Endothelial cell of umbilical vein (primary cell): ENCODE measurements at regions of chr9 and their contacts with region 1.

Region 1: DNA sequence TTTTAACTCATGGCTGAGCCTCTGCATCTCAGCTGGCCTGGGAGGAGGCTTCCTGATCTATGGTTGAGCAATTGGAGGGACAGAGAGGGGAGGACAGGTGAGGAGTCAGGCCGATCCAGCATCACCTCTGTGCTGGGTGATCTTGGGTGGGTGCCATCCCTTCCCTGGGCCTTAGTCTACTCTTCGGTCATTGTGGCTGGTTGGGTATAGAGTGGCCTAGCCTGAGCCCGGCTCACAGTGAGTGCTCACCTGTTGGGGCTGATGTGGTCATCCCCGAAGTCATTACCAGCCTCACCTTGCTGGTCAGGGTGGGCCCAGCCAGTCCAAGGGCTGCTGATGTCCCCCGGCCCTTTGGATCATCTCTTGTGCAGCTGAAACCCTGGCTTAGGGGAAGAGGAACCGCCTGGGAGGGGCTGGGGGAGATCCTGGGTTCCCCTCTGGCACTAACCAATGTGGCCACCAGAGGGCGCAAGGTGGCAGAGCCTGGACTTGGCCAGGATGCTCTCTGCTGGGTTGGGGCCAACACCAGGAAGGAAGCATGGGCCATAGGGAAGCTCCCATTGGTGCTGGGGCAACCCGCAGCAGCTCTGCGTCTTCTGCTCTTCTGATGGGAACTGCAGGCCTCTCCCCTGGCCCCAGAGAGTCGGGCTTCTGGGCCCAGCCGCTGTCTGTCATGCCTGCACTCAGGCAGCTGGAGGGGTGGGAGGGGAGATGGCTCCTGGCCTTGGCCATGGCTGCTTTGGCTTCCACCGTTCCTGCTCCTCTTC is 17.3 kb upstream of the ODF2 start:
- DNase-seq: peak; percentile 78
- H3K4me3 ChIP-seq: no peak overlapping the region
- H3K27ac ChIP-seq: no peak overlapping the region
- H3K4me1 ChIP-seq: peaks cover 2% of the 10 kb centered on the region
- H3K27me3 ChIP-seq: no peaks in the 10 kb centered on the region
- CTCF ChIP-seq: peak; percentile 92 to 98
- POLR2A ChIP-seq: peak; percentile 63

Region 2: GRCh38 chr9:128094166-128094967 is 344.2 kb before region 1 on chr9:
- CTCF ChIA-PET with region 1: no interaction called
- POLR2A ChIA-PET with region 1: no interaction called
- dilution Hi-C with region 1: no loop called
- intact Hi-C with region 1: no loop called
- DNase-seq: peak; percentile 98
- H3K4me3 ChIP-seq: peak overlapping the region in 2 of 3 experiments; percentile 22 to 54
- H3K27ac ChIP-seq: peak overlapping the region; percentile 93
- H3K4me1 ChIP-seq: peaks cover 33% of the 10 kb centered on the region
- H3K27me3 ChIP-seq: no peaks in the 10 kb centered on the region
- CTCF ChIP-seq: no peak
- POLR2A ChIP-seq: peak; percentile 67

Region 3: DNA sequence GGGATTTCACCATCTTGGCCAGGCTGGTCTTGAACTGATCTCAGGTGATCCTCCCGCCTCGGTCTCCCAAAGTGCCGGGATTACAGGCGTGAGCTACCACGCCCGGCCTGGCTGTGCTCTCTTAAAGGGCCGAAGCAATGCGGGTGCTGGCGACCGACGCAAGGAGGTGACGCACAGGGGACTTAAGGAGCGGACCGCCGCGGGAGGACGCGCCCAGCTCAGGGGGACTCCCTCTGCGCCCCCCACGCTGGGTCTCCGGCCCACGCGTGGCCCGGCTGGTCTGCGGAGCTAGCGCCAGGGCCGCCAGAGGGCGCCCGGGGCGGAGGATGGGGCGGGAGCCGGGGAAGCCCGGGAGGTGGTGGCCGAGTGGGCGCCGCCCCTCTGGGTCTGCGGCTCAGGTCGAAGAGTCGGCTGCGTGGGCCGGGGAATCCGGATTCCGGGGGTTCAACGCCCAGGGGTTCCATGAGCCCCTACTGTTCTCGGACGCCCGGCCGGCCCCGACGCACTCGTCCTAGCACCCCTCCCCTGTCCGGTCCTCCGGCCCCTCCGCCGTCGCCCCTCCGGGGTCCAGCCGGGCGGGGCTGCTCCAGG is 18.4 kb before region 1 on chr9:
- CTCF ChIA-PET with region 1: interaction called, 45 read pairs
- POLR2A ChIA-PET with region 1: interaction called, 3 read pairs
- dilution Hi-C with region 1: no loop called
- intact Hi-C with region 1: no loop called
- DNase-seq: peak; percentile 63
- H3K4me3 ChIP-seq: peak overlapping the region; percentile 53 to 65 (median 59)
- H3K27ac ChIP-seq: no peak overlapping the region
- H3K4me1 ChIP-seq: peaks cover 13% of the 10 kb centered on the region
- H3K27me3 ChIP-seq: peaks cover 6 to 9% of the 10 kb centered on the region in 2 experiments
- CTCF ChIP-seq: peak; percentile 85 to 89
- POLR2A ChIP-seq: peak; percentile 28

Region 4: GRCh38 chr9:128455849-128456612 is 17.5 kb after region 1 on chr9 and contains the start of gene ODF2:
- CTCF ChIA-PET with region 1: interaction called, 57 read pairs
- POLR2A ChIA-PET with region 1: no interaction called
- dilution Hi-C with region 1: no loop called
- intact Hi-C with region 1: loop called (anchors 1 kb)
- DNase-seq: peak; percentile 95
- H3K4me3 ChIP-seq: peak within 1 kb of the TSS; percentile 50 to 66 (median 55)
- H3K27ac ChIP-seq: peak within 1 kb of the TSS; percentile 64
- H3K4me1 ChIP-seq: peaks cover 7% of the 10 kb centered on the region
- H3K27me3 ChIP-seq: no peaks in the 10 kb centered on the region
- CTCF ChIP-seq: no peak
- POLR2A ChIP-seq: peak; percentile 86
- total RNA-seq, gene ODF2: 49.5 and 50.5 TPM in 2 replicates

Region 5: DNA sequence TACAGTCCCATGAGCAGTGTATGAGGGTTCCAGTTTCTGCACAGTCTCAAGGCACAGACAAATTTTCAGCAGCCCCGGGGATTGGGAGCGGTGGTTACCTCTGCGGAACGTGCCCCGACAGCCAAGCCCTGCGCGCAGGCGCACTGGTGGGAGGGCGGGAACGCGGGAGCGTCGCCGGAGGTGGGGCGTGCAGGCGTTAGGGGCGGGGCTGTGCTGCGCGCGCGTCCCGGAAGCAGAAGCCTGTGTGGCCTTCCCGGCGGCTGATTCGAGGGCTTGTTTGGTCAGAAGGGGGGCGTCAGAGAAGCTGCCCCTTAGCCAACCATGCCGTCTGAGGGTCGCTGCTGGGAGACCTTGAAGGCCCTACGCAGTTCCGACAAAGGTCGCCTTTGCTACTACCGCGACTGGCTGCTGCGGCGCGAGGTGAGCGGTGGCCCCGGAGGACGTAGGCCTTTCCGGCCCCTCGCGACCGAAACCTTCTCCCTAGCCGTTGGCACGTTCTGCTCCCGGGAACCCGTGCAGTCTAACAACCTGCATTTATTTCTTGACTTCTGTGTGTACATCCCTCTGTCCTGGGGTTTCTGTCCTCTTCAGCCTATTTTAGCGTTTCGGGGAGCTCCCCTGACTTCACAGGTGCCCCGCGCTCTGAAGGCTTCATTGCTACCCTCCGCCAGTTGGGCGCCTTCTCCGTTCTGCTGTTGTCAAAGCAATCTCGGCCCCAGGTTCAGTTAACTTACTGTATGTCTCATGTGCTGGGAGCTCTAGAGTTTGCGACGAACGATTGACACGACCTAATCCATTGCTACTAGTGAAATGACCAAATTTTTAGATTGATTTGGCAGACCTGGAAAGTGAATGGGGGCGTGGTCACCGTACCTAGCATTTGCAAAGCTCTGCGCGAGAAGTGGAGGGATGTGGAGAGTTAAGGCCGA is 66.2 kb after region 1 on chr9 and contains the start of gene GLE1:
- CTCF ChIA-PET with region 1: interaction called, 10 read pairs
- POLR2A ChIA-PET with region 1: no interaction called
- dilution Hi-C with region 1: no loop called
- intact Hi-C with region 1: loop called (anchors 2 kb)
- DNase-seq: peak; percentile 94
- H3K4me3 ChIP-seq: peak within 1 kb of the TSS; percentile 22 to 80 (median 72)
- H3K27ac ChIP-seq: peak within 1 kb of the TSS; percentile 12
- H3K4me1 ChIP-seq: peaks cover 7% of the 10 kb centered on the region
- H3K27me3 ChIP-seq: no peaks in the 10 kb centered on the region
- CTCF ChIP-seq: no peak
- POLR2A ChIP-seq: peak; percentile 93
- total RNA-seq, gene GLE1: 20.5 and 22.6 TPM in 2 replicates